HepG2 (cell line): ENCODE measurements at regions of chr5 and their contacts with region 1.

Region 1: GRCh38 chr5:124951661-124952060 is 205.2 kb upstream of the ZNF608 start:
- DNase-seq: no peak
- ATAC-seq: no peak
- H3K4me3 ChIP-seq: no peak overlapping the region
- H3K27ac ChIP-seq: no peak overlapping the region
- H3K4me1 ChIP-seq: no peaks in the 10 kb centered on the region
- H3K27me3 ChIP-seq: no peaks in the 10 kb centered on the region; a peak in 1 of 5 replicates
- CTCF ChIP-seq: no peak
- EP300 ChIP-seq: no peak
- POLR2A ChIP-seq: no peak
- RAD21 ChIP-seq: no peak

Region 2: GRCh38 chr5:124812754-124813358 is 138.8 kb before region 1 on chr5:
- CTCF ChIA-PET with region 1: no interaction called
- POLR2A ChIA-PET with region 1: no interaction called
- in situ Hi-C with region 1: no loop called
- intact Hi-C with region 1: no loop called
- DNase-seq: no peak
- ATAC-seq: no peak
- H3K4me3 ChIP-seq: no peak overlapping the region
- H3K27ac ChIP-seq: no peak overlapping the region
- H3K4me1 ChIP-seq: no peaks in the 10 kb centered on the region
- H3K27me3 ChIP-seq: peaks cover 0 to 4% of the 10 kb centered on the region in 2 experiments; a peak in 1 of 5 replicates
- CTCF ChIP-seq: no peak
- EP300 ChIP-seq: no peak
- POLR2A ChIP-seq: no peak
- RAD21 ChIP-seq: no peak

Region 3: DNA sequence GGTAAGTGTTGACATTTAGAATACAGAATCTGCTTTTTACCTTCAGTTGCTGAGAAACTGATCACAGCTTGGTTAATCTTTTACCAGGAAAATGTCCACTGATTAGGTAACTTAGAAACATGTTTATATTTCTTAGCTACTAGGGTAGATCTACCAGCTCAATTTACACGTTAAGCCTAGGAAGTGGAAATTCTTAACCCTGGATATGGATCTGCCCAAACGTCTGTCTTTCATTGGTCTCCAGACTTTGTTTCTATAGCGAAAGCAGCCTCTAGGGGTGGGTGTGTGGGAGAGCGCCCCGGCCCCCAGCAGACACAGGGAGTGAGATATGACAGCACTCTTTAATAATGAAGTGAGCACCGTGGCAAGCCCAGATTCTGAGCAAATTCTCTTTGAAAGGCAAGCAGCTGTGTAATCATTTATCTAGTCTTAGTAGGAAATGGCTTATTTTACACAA is 63.6 kb before region 1 on chr5:
- CTCF ChIA-PET with region 1: no interaction called
- POLR2A ChIA-PET with region 1: no interaction called
- in situ Hi-C with region 1: no loop called
- intact Hi-C with region 1: loop called (anchors 2 kb)
- DNase-seq: peak; percentile 53
- ATAC-seq: peak; percentile 100
- H3K4me3 ChIP-seq: peak overlapping the region; percentile 4 to 66 (median 52); a peak in 4 of 6 replicates
- H3K27ac ChIP-seq: no peak overlapping the region
- H3K4me1 ChIP-seq: peaks cover 26% of the 10 kb centered on the region
- H3K27me3 ChIP-seq: no peaks in the 10 kb centered on the region
- CTCF ChIP-seq: peak; percentile 45
- EP300 ChIP-seq: peak in 1 of 2 experiments; percentile 13; a peak in 1 of 4 replicates
- POLR2A ChIP-seq: no peak
- RAD21 ChIP-seq: no peak